Activated CD4-positive, alpha-beta memory T cell treated with anti-CD3 and anti-CD28 coated beads for 36 hours (primary cell): ENCODE measurements at regions of chr5 and their contacts with region 1.

Region 1: GRCh38 chr5:142748568-142749249 is 21.5 kb upstream of the ARHGAP26 start:
- DNase-seq: peak; percentile 72
- H3K4me3 Mint-ChIP-seq: no peak overlapping the region
- H3K27ac Mint-ChIP-seq: peak overlapping the region; percentile 57
- H3K4me1 Mint-ChIP-seq: peaks cover 12% of the 10 kb centered on the region
- H3K27me3 Mint-ChIP-seq: peaks cover 2% of the 10 kb centered on the region

Region 2: DNA sequence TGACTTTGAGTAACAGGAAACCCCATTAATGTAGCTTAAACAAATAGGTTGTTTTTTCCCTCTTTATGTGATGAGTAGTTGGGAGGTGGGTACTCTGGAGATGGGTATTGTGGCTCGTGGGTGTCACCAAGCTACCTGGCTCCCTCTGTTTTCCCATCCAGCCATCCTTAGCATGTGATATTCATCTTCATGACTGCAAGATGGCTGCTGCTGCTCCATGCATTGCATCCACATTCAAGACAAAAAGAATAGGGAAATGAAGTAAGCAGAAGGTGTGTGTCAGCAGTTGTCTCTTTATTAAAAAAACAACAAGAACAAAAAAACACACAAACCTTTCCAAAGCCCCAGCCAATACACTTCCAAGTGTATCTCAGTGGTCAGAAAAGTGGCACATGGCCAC is 15.0 kb after region 1 on chr5:
- CTCF ChIA-PET with region 1: interaction called, 10 read pairs
- POLR2A ChIA-PET with region 1: no interaction called
- intact Hi-C with region 1: no loop called
- DNase-seq: no peak
- H3K4me3 Mint-ChIP-seq: no peak overlapping the region
- H3K27ac Mint-ChIP-seq: no peak overlapping the region
- H3K4me1 Mint-ChIP-seq: peaks cover 5% of the 10 kb centered on the region
- H3K27me3 Mint-ChIP-seq: no peaks in the 10 kb centered on the region

Region 3: DNA sequence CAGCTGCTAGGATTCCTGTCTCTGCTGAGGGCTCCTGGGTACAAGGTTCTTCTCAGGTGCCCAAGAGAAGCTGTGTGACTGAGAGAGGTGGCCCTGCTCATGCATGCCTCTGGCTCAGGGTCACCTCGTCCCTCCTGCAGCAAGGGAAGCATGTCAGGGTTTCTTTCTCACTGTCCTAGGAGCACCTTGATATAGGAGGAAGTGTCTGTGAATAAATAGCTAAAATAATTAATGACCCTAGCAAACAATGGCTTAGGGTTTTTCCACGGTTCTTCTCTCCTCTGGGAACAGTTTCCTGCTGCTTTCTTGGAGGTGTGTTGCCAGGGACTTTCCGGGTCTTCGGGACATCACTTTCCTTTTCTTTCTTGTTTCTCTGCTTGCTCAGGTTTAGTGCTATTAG is 108.7 kb after region 1 on chr5:
- CTCF ChIA-PET with region 1: interaction called, 14 read pairs
- POLR2A ChIA-PET with region 1: no interaction called
- intact Hi-C with region 1: no loop called
- DNase-seq: no peak
- H3K4me3 Mint-ChIP-seq: no peak overlapping the region
- H3K27ac Mint-ChIP-seq: no peak overlapping the region
- H3K4me1 Mint-ChIP-seq: peaks cover 2% of the 10 kb centered on the region
- H3K27me3 Mint-ChIP-seq: no peaks in the 10 kb centered on the region

Region 4: DNA sequence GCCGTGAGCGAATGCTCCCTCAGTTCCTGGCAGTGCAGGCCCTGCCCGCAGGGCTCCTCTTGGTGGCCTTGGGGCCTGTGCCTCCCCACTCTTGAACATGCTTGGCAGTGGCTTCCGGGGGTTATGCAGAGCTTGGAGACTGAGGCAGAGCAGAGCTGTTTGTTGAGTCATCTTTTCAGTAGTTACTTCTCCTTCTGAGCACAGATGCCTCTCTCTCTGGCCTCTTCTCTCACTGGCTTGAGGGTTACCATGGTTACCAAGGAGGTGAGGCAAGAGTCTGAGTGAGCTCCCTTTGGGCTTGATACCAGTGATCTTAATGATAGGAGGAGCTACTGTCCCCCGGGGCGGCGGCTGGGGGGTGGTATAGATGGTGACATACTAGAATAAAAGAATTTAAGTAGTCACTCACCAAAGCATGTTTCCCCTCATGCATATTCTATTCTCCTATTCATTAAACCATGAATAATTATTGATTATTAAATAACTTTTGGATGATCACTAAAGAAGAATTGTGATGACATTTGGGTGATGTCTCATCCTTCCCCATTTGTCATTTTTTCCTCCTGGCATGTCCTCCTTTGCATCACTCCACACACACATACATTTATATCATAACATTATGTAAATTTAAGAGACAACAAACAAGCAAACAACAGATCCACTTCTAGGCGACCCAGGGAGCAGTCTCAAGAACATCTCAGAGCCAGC is 132.5 kb after region 1 on chr5:
- CTCF ChIA-PET with region 1: interaction called, 251 read pairs
- POLR2A ChIA-PET with region 1: no interaction called
- intact Hi-C with region 1: loop called (anchors 1 kb)
- DNase-seq: no peak
- H3K4me3 Mint-ChIP-seq: no peak overlapping the region
- H3K27ac Mint-ChIP-seq: no peak overlapping the region
- H3K4me1 Mint-ChIP-seq: no peaks in the 10 kb centered on the region
- H3K27me3 Mint-ChIP-seq: no peaks in the 10 kb centered on the region

Region 5: GRCh38 chr5:142915813-142916424 is 167.2 kb after region 1 on chr5:
- CTCF ChIA-PET with region 1: interaction called, 15 read pairs
- POLR2A ChIA-PET with region 1: no interaction called
- intact Hi-C with region 1: no loop called
- DNase-seq: peak; percentile 18
- H3K4me3 Mint-ChIP-seq: no peak overlapping the region
- H3K27ac Mint-ChIP-seq: no peak overlapping the region
- H3K4me1 Mint-ChIP-seq: no peaks in the 10 kb centered on the region
- H3K27me3 Mint-ChIP-seq: no peaks in the 10 kb centered on the region